Dendritic cell treated with granulocyte-macrophage colony-stimulating factor and Interleukin-4, amounts not matched to agents 40 ng/mL and 50 ng/mL, for 4 days (primary cell): ENCODE measurements at regions of chr20 and their contacts with region 1.

Region 1: GRCh38 chr20:43590392-43591323 is at the start of gene IFT52:
- H3K4me3 Mint-ChIP-seq: peak within 1 kb of the TSS; percentile 90
- H3K27ac Mint-ChIP-seq: peak within 1 kb of the TSS; percentile 92
- H3K4me1 Mint-ChIP-seq: peaks cover 15% of the 10 kb centered on the region
- H3K27me3 Mint-ChIP-seq: no peaks in the 10 kb centered on the region

Region 2: DNA sequence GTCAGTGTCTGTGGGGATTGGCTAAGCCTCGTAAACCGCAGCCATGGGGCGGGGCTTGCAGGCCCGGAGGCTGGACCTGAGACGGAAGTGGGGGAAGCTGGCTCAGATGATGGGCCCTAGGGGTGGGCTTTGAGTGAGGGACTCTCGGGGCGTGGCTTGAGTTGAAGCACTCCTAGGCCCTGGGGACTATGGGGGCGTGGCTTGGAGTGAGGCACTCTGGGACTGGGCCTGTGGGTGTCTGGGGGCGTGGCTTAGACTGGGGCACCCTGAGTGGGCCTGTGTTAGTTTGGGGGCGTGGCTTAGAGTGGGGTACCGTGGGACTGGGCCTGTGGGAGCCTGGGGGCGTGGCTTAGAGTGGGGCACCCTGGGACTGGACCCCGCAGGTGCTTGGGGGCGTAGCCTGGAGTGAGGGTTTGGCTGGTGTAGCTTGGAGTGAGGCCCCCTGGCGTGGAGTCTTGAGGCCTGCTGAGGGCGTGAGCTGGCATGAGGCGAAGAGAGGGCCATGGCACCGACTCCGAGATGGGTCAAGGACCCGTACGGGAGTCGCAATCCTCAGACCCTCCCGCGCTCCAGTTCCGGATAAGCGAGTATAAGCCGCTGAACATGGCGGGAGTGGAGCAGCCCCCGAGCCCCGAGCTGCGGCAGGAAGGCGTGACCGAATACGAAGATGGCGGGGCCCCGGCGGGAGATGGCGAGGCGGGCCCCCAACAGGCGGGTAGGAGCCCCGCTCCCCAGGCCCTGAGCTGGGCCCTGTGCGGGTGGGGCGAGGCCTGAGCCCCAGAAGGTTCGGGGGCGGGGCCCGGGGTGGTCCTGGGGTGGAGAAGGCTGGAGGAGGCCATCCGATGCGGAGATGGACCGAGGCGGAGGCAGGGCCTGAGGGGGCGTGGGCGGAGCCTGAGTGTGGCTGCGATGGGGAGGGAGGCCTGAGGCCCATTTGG is 76.3 kb before region 1 on chr20:
- intact Hi-C with region 1: loop called (anchors 1 kb)
- H3K4me3 Mint-ChIP-seq: peak overlapping the region; percentile 93
- H3K27ac Mint-ChIP-seq: peak overlapping the region; percentile 85
- H3K4me1 Mint-ChIP-seq: peaks cover 15% of the 10 kb centered on the region
- H3K27me3 Mint-ChIP-seq: peaks cover 4% of the 10 kb centered on the region

Region 3: GRCh38 chr20:43650997-43651525 is 60.4 kb after region 1 on chr20:
- intact Hi-C with region 1: no loop called
- H3K4me3 Mint-ChIP-seq: no peak overlapping the region
- H3K27ac Mint-ChIP-seq: no peak overlapping the region
- H3K4me1 Mint-ChIP-seq: no peaks in the 10 kb centered on the region
- H3K27me3 Mint-ChIP-seq: peaks cover 1% of the 10 kb centered on the region

Region 4: GRCh38 chr20:43666376-43667328 is 76.0 kb after region 1 on chr20 and contains the start of gene MYBL2:
- intact Hi-C with region 1: loop called (anchors 2 kb)
- H3K4me3 Mint-ChIP-seq: peak within 1 kb of the TSS; percentile 70
- H3K27ac Mint-ChIP-seq: no peak within 1 kb of the TSS
- H3K4me1 Mint-ChIP-seq: peaks cover 16% of the 10 kb centered on the region
- H3K27me3 Mint-ChIP-seq: peaks cover 31% of the 10 kb centered on the region